ENCODE measurements at regions of chr21 and their contacts with region 1.

Region 1: DNA sequence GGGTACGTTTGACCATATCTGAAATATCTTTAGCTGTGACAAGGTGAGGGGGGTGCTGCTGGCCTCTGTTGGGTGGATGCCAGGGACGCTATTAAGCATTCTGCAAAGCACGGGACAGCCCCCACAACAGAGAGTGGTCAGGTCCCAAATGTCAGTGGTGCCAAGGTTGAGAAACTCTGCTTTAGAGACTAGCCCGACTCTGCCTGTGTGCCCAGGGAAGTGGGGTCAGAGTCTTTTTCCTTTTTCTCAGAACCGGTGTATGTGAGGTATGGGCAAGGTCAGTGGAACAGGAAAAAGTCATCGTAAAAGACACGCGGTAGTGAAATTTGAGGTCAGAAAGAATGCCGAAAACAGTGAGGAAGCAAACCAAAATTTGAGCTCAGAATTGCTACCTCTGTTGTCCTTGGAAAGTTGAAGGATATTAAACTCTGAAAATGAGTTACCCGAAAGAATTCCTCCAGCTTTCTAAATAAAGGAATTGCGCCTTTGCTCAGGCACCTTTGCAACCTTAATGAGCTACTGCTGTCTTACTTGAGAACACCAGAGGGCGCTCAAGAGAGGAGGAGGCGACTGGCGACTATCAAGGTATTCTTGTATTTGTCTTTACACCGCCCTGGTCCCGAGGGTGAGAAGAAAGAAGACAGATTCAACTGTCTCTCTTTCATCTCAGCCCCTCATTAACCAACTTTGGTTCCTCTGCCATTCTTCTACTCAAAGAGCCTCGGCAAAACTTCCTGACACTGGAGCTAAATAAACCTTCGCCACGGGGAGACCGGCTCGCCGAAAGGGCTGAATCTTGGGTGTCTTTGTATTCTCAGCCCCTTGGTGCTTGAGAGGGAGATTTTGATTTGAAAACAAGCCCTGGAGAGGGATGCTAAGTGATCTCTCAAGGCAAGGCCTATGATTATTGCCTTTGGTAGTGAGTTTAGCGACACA is 85.4 kb upstream of the OLIG2 start:
- DNase-seq: peak; percentile 41
- H3K4me3 ChIP-seq: no peak overlapping the region
- H3K27ac ChIP-seq: no peak overlapping the region
- H3K4me1 ChIP-seq: no peaks in the 10 kb centered on the region
- H3K27me3 ChIP-seq: peaks cover 18% of the 10 kb centered on the region
- CTCF ChIP-seq: peak; percentile 50 to 79 (median 72)
- EP300 ChIP-seq: no peak
- POLR2A ChIP-seq: no peak

Region 2: DNA sequence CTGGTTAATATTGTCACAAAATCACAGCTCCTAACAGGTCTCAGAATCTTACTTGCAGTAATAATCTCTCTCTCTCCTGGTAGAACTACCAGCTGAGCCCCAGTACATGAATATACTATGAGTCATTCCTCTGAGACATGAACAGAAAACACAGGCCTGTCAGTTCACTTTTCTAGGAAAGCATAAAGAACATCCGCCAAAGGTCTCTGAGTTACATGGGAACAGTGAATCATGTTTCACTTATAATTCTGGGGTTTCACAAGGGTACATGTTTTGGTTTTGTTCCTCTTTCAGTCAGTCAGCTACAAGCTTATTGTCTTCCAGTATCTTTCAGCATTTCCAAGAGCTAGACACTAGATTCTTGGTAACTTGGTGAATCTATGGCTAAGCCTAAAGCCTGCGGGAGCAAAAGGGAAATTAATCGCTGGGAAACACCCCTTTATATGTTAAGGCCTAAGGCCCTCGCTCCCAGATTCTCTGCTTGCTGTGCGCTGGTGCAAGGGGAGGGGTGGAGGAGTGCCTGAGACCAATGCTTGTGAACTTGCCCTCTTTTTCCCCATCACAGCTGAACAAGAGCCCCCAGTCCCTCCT is 494.5 kb after region 1 on chr21:
- in situ Hi-C with region 1: loop called in 1 of 4 experiments (anchors 25 kb)
- intact Hi-C with region 1: no loop called
- DNase-seq: no peak
- H3K4me3 ChIP-seq: no peak overlapping the region
- H3K27ac ChIP-seq: peak overlapping the region; percentile 72 to 83 (median 78)
- H3K4me1 ChIP-seq: peaks cover 6 to 18% (median 6%) of the 10 kb centered on the region in 4 donors
- H3K27me3 ChIP-seq: no peaks in the 10 kb centered on the region
- CTCF ChIP-seq: no peak
- EP300 ChIP-seq: no peak
- POLR2A ChIP-seq: no peak

Region 3: GRCh38 chr21:33451634-33452071 is 511.3 kb after region 1 on chr21:
- in situ Hi-C with region 1: loop called in 2 of 4 experiments (anchors 25 kb)
- intact Hi-C with region 1: no loop called
- DNase-seq: no peak
- H3K4me3 ChIP-seq: no peak overlapping the region
- H3K27ac ChIP-seq: peak overlapping the region in 1 of 4 donors; percentile 23
- H3K4me1 ChIP-seq: peaks cover 0 to 12% (median 3%) of the 10 kb centered on the region in 4 donors
- H3K27me3 ChIP-seq: no peaks in the 10 kb centered on the region
- CTCF ChIP-seq: no peak
- EP300 ChIP-seq: no peak
- POLR2A ChIP-seq: no peak